ENCODE measurements at regions of chr7 and their contacts with region 1.

Region 1: DNA sequence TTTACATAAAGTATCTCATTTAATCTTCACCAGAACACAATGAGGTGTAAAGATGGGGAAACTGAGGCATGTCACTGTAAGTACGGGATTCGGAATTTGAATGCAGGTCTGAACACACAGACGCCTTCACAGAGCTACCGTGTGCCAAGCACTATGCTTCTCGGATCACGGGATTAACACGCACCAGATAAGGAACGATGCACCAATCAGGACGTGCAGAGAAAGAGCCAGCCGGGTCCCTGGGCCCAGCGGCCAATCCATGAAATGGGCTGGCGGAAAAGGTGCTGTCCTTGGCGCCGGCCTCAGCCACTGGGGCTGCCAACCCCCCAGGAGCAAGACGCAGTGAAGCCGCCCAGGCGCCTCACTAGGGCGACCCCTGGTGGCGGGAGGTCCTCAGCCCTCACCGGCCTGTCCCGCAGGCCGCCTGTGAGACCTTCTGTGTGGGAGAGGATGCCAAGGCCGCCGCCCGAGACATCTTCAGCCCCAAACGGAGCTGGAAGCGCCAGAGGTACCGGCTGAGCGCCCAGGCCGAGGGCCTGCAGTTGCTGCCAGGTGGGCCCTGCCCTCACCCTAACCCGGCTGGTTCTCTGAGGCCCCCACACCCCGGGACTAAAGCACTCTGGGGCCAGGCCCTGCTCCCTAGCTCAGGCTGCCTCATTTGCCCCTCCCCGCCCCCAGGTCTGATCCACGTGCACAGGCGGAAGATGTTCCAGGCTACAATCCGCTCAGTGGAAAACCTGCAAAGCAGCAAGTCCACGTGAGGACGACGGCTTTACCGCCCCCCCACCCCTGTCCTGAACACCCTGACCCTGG is 15.6 kb downstream of the ATG9B start:
- DNase-seq: peak; percentile 53 to 88 (median 74)
- ATAC-seq: peak; percentile 18
- H3K4me3 ChIP-seq: peak overlapping the region; percentile 52
- H3K4me3 Mint-ChIP-seq: peak overlapping the region; percentile 87
- H3K27ac ChIP-seq: peak overlapping the region; percentile 74 to 79
- H3K27ac Mint-ChIP-seq: peak overlapping the region; percentile 88
- H3K4me1 ChIP-seq: peaks cover 75% of the 10 kb centered on the region
- H3K4me1 Mint-ChIP-seq: peaks cover 71% of the 10 kb centered on the region
- H3K27me3 ChIP-seq: no peaks in the 10 kb centered on the region
- H3K27me3 Mint-ChIP-seq: no peaks in the 10 kb centered on the region
- CTCF ChIP-seq: peak; percentile 67

Region 2: DNA sequence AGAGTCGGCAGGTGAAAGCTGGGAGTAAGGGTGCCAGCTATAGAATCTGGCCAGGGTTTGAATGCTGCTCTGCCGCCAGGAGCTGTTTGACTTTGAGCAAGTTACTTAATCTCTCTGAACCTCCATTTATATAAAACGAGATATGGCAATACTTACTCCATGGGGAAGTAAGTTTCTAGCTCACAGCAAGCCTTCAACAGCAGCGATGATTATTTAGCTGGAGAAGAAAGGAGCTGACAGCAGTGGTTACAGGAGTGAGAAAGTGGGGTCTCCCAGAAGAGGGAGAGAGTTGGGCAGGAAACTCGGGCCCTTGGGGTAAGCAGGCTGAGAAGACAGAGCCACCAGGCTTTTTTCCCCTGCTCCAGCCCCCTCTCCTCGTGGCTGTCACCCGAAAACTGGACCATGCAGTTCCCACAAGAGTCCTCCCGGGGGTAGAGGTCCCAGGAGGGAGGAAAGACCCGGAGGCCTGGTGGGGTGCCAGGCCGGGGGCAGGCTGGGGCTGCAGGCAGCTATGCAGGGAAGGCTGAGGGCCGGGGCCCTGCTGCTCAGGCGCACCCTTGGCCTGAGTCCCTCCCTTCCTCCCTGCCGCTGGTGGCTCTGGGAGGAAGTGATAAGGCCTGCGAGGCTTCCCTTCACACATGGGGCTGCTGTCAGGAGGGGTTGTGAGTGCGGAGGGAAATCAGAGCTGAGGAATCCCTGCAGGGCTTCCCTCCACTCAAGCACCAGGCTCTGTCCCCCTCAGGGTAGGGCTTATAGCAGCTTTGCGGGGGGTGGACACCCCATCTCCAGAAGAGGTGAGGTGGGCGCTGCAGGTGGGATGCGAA is 14.4 kb before region 1 on chr7:
- CTCF ChIA-PET with region 1: interaction called, 5 read pairs
- POLR2A ChIA-PET with region 1: interaction called, 19 read pairs
- intact Hi-C with region 1: no loop called
- DNase-seq: peak in 4 of 14 experiments; percentile 54 to 60 (median 58)
- ATAC-seq: peak; percentile 53
- H3K4me3 ChIP-seq: peak overlapping the region; percentile 35
- H3K4me3 Mint-ChIP-seq: peak overlapping the region; percentile 54
- H3K27ac ChIP-seq: peak overlapping the region; percentile 15 to 50
- H3K27ac Mint-ChIP-seq: peak overlapping the region; percentile 64
- H3K4me1 ChIP-seq: peaks cover 57% of the 10 kb centered on the region
- H3K4me1 Mint-ChIP-seq: peaks cover 52% of the 10 kb centered on the region
- H3K27me3 ChIP-seq: no peaks in the 10 kb centered on the region
- H3K27me3 Mint-ChIP-seq: no peaks in the 10 kb centered on the region
- CTCF ChIP-seq: no peak

Region 3: DNA sequence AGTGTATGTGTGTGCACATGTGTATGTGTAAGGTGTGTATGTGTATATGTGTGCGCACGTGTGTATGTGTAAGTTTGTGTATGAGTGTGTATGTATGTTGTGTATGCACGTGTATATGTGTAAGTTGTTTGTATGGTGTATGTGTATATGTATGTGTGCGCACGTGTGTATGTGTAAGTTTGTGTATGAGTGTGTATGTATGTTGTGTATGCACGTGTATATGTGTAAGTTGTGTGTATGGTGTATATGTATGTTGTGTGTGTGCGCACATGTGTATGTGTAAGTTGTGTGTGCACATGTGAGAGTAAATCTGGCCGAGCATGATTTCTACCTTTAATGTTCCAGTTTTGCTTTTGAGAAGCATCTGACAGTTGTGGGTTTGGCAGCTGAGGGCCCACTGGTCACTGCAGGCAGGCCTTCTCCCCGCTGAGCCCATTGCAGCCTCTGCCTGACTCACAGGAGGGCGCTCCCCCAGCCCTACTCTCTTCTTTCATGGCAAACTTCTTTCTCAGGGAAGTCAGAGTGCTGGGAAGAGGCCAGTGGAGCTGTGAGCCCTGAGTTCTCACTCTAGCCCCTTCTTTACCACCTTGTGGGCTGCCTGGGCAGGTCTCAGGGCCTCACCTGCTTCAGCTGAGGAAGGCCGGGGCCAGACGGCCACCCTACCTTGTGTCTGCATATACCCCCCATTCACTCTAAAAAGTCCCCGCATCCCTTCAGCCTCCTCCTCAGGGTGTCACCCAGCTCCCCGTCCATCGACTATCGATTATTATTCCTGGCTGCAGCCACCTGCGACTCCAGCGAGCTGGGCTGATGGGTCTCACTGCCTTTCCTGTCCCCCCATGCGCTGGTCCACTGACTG is 390.0 kb after region 1 on chr7:
- CTCF ChIA-PET with region 1: no interaction called
- POLR2A ChIA-PET with region 1: no interaction called
- intact Hi-C with region 1: no loop called
- DNase-seq: no peak
- ATAC-seq: no peak
- H3K4me3 ChIP-seq: no peak overlapping the region
- H3K4me3 Mint-ChIP-seq: no peak overlapping the region
- H3K27ac ChIP-seq: no peak overlapping the region
- H3K27ac Mint-ChIP-seq: no peak overlapping the region
- H3K4me1 ChIP-seq: peaks cover 42% of the 10 kb centered on the region
- H3K4me1 Mint-ChIP-seq: peaks cover 6% of the 10 kb centered on the region
- H3K27me3 ChIP-seq: no peaks in the 10 kb centered on the region
- H3K27me3 Mint-ChIP-seq: no peaks in the 10 kb centered on the region
- CTCF ChIP-seq: no peak

Region 4: GRCh38 chr7:151539088-151539671 is 530.5 kb after region 1 on chr7:
- CTCF ChIA-PET with region 1: no interaction called
- POLR2A ChIA-PET with region 1: no interaction called
- intact Hi-C with region 1: no loop called
- DNase-seq: no peak
- ATAC-seq: no peak
- H3K4me3 ChIP-seq: no peak overlapping the region
- H3K4me3 Mint-ChIP-seq: no peak overlapping the region
- H3K27ac ChIP-seq: no peak overlapping the region
- H3K27ac Mint-ChIP-seq: no peak overlapping the region
- H3K4me1 ChIP-seq: peaks cover 3% of the 10 kb centered on the region
- H3K4me1 Mint-ChIP-seq: peaks cover 10% of the 10 kb centered on the region
- H3K27me3 ChIP-seq: no peaks in the 10 kb centered on the region
- H3K27me3 Mint-ChIP-seq: peaks cover 16% of the 10 kb centered on the region
- CTCF ChIP-seq: no peak